ENCODE measurements at regions of chr2 and their contacts with region 1.

Region 1: GRCh38 chr2:241391892-241392665 is 36.0 kb downstream of the FARP2 start:
- DNase-seq: no peak
- ATAC-seq: peak; percentile 89
- H3K4me3 ChIP-seq: no peak overlapping the region
- H3K27ac ChIP-seq: 0 out of 2 replicates have a peak overlapping the region, but pooled peaks have one; percentile 18
- H3K4me1 ChIP-seq: peaks cover 42% of the 10 kb centered on the region
- H3K27me3 ChIP-seq: no peaks in the 10 kb centered on the region
- CTCF ChIP-seq: peak; percentile 63 to 68 (median 65)
- EP300 ChIP-seq: no peak
- POLR2A ChIP-seq: no peak
- RAD21 ChIP-seq: peak; percentile 63

Region 2: GRCh38 chr2:241217320-241218031 is 174.6 kb before region 1 on chr2:
- CTCF ChIA-PET with region 1: interaction called, 27 read pairs
- POLR2A ChIA-PET with region 1: no interaction called
- RAD21 ChIA-PET with region 1: interaction called, 23 read pairs
- SMC1A ChIA-PET with region 1: interaction called, 9 read pairs
- in situ Hi-C with region 1: no loop called
- intact Hi-C with region 1: no loop called
- DNase-seq: no peak
- ATAC-seq: peak; percentile 80
- H3K4me3 ChIP-seq: peak overlapping the region; percentile 64
- H3K27ac ChIP-seq: no peak overlapping the region
- H3K4me1 ChIP-seq: no peaks in the 10 kb centered on the region
- H3K27me3 ChIP-seq: no peaks in the 10 kb centered on the region
- CTCF ChIP-seq: peak in 1 of 3 experiments; percentile 5; a peak in 1 of 6 replicates
- EP300 ChIP-seq: no peak
- POLR2A ChIP-seq: no peak
- RAD21 ChIP-seq: no peak

Region 3: GRCh38 chr2:241302759-241303651 is 89.1 kb before region 1 on chr2:
- CTCF ChIA-PET with region 1: interaction called, 6 read pairs
- POLR2A ChIA-PET with region 1: no interaction called
- RAD21 ChIA-PET with region 1: interaction called, 4 read pairs
- SMC1A ChIA-PET with region 1: interaction called, 15 read pairs
- in situ Hi-C with region 1: no loop called
- intact Hi-C with region 1: no loop called
- DNase-seq: no peak
- ATAC-seq: 0 out of 3 replicates have a peak, but pooled peaks have one; percentile 4
- H3K4me3 ChIP-seq: no peak overlapping the region
- H3K27ac ChIP-seq: peak overlapping the region; percentile 24; the same call in 1 of the 2 replicates
- H3K4me1 ChIP-seq: peaks cover 19% of the 10 kb centered on the region
- H3K27me3 ChIP-seq: no peaks in the 10 kb centered on the region
- CTCF ChIP-seq: no peak
- EP300 ChIP-seq: no peak
- POLR2A ChIP-seq: no peak
- RAD21 ChIP-seq: no peak

Region 4: GRCh38 chr2:241321886-241322285 is 70.2 kb before region 1 on chr2:
- CTCF ChIA-PET with region 1: interaction called, 23 read pairs
- POLR2A ChIA-PET with region 1: no interaction called
- RAD21 ChIA-PET with region 1: interaction called, 13 read pairs
- SMC1A ChIA-PET with region 1: interaction called, 28 read pairs
- in situ Hi-C with region 1: no loop called
- intact Hi-C with region 1: loop called (anchors 5 kb)
- DNase-seq: no peak
- ATAC-seq: no peak
- H3K4me3 ChIP-seq: peak overlapping the region; percentile 44
- H3K27ac ChIP-seq: peak overlapping the region; percentile 14; the same call in 1 of the 2 replicates
- H3K4me1 ChIP-seq: peaks cover 29% of the 10 kb centered on the region
- H3K27me3 ChIP-seq: no peaks in the 10 kb centered on the region
- CTCF ChIP-seq: no peak
- EP300 ChIP-seq: no peak
- POLR2A ChIP-seq: no peak
- RAD21 ChIP-seq: no peak

Region 5: GRCh38 chr2:241355983-241356870 is 35.9 kb before region 1 on chr2 and contains the start of gene FARP2:
- CTCF ChIA-PET with region 1: interaction called, 88 read pairs
- POLR2A ChIA-PET with region 1: interaction called, 41 read pairs
- RAD21 ChIA-PET with region 1: interaction called, 75 read pairs
- SMC1A ChIA-PET with region 1: interaction called, 176 read pairs
- in situ Hi-C with region 1: no loop called
- intact Hi-C with region 1: loop called (anchors 1 kb)
- DNase-seq: peak; percentile 90
- ATAC-seq: peak; percentile 86
- H3K4me3 ChIP-seq: peak within 1 kb of the TSS; percentile 91
- H3K27ac ChIP-seq: peak within 1 kb of the TSS; percentile 64
- H3K4me1 ChIP-seq: peaks cover 10% of the 10 kb centered on the region
- H3K27me3 ChIP-seq: no peaks in the 10 kb centered on the region
- CTCF ChIP-seq: no peak
- EP300 ChIP-seq: no peak
- POLR2A ChIP-seq: peak; percentile 97
- RAD21 ChIP-seq: 0 out of 2 replicates have a peak, but pooled peaks have one; percentile 10
- polyA plus RNA-seq, gene FARP2: 5.5 to 5.6 TPM

Region 6: DNA sequence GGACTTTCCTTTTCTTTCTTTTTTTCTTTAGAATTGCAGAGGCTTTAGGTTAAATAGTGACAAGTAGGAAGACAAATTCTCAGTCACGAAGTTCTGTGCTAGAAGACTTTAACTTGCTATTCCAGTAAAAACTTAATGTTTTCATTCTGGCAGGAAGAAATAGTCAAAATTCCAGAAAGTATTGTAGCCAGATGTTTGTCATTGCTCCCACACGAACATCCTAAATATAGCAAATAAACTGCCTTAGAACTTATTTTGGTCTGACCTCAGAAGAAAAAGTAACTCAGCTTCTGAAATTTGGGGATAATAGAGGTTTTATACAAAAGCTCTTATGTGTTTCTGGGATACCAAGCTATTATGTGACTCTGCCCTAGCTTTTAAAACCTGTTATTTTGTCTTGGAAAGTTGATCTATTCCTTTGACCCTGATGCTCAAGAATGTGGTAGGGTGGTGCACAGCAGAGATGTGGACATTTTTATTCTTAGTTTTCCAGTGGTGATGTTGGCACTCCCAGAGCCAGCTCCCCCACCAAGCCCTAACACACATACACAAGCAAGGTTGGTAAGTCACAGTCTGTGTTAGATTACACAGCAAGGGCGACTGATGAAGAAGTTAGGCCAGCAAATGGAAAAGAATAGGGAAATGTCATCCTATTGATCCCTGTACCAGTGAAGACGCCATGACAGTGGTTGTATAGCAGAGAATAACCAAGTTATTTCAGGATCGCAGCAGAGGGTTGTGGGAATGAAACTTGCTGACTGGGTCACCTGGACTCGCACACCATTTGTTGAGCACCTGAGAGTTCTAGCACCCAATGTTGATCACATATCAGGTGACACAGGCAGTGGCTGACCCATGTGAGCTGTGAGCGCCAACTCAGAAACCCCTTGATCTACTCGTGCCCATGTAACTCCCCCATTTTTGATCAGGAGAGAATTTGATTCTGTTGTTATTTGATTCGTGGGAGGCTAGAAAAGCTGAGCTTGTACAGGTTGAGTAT is 12.3 kb before region 1 on chr2:
- CTCF ChIA-PET with region 1: interaction called, 46 read pairs
- POLR2A ChIA-PET with region 1: interaction called, 11 read pairs
- RAD21 ChIA-PET with region 1: interaction called, 35 read pairs
- SMC1A ChIA-PET with region 1: interaction called, 39 read pairs
- in situ Hi-C with region 1: no loop called
- intact Hi-C with region 1: no loop called
- DNase-seq: no peak
- ATAC-seq: no peak
- H3K4me3 ChIP-seq: no peak overlapping the region
- H3K27ac ChIP-seq: no peak overlapping the region
- H3K4me1 ChIP-seq: peaks cover 23% of the 10 kb centered on the region
- H3K27me3 ChIP-seq: no peaks in the 10 kb centered on the region
- CTCF ChIP-seq: no peak
- EP300 ChIP-seq: no peak
- POLR2A ChIP-seq: no peak
- RAD21 ChIP-seq: no peak

Region 7: GRCh38 chr2:241415196-241415595 is 23.1 kb after region 1 on chr2:
- CTCF ChIA-PET with region 1: no interaction called
- POLR2A ChIA-PET with region 1: no interaction called
- RAD21 ChIA-PET with region 1: no interaction called
- SMC1A ChIA-PET with region 1: no interaction called
- in situ Hi-C with region 1: no loop called
- intact Hi-C with region 1: no loop called
- DNase-seq: no peak
- ATAC-seq: no peak
- H3K4me3 ChIP-seq: no peak overlapping the region
- H3K27ac ChIP-seq: no peak overlapping the region
- H3K4me1 ChIP-seq: no peaks in the 10 kb centered on the region
- H3K27me3 ChIP-seq: no peaks in the 10 kb centered on the region
- CTCF ChIP-seq: no peak
- EP300 ChIP-seq: no peak
- POLR2A ChIP-seq: no peak
- RAD21 ChIP-seq: no peak